ENCODE measurements at regions of chr10 and their contacts with region 1.

Region 1: DNA sequence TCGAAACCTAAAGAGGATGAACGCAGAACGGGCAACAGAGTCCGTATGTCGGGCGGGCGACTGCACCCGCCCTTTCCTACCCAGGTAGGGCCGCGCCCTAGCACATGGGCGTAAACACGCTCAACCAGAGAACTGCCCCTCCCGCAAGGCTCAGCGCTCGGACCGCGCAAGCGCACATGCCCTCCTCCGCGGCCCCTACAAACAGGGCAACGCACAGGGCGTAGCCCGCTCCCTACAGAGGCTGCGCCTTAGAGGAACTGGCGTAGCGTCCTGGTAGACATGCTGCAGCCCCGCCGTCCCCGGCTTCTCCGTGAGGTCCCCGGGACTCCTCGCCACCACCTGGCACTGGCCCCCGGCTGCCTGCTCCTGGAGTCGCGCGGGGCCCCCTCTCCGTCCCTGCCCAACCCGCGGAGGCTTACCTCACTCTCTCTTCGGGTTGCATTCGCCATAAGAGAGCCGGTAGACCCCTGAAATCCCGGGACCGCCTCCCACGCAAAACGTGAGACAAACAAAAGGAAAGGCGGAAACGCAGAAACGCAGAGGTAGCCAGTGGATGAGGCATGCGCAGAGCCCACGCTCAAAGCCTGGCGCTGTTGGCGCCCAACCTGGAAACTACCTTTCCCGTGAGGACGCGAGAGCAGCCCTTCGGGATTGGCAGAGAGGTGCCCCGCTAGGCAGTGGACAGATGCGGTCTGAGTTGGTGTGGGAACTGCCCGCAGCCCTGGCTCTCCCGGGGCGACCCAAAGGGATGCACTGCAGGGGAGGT is at the start of gene ZNF33B:
- DNase-seq: peak; percentile 96
- H3K4me3 Mint-ChIP-seq: peak within 1 kb of the TSS; percentile 83
- H3K27ac Mint-ChIP-seq: peak within 1 kb of the TSS; percentile 86
- H3K4me1 Mint-ChIP-seq: peaks cover 12% of the 10 kb centered on the region
- H3K27me3 Mint-ChIP-seq: no peaks in the 10 kb centered on the region
- CTCF ChIP-seq: no peak
- total RNA-seq, gene ZNF33B: 16.9 and 27.2 TPM in 2 replicates

Region 2: GRCh38 chr10:42552493-42553407 is 85.5 kb before region 1 on chr10:
- CTCF ChIA-PET with region 1: interaction called, 5 read pairs
- intact Hi-C with region 1: loop called (anchors 2 kb)
- DNase-seq: peak; percentile 91
- H3K4me3 Mint-ChIP-seq: peak overlapping the region; percentile 99
- H3K27ac Mint-ChIP-seq: peak overlapping the region; percentile 78
- H3K4me1 Mint-ChIP-seq: peaks cover 9% of the 10 kb centered on the region
- H3K27me3 Mint-ChIP-seq: no peaks in the 10 kb centered on the region
- CTCF ChIP-seq: no peak

Region 3: GRCh38 chr10:42623929-42624328 is 14.3 kb before region 1 on chr10:
- CTCF ChIA-PET with region 1: no interaction called
- intact Hi-C with region 1: no loop called
- DNase-seq: no peak
- H3K4me3 Mint-ChIP-seq: no peak overlapping the region
- H3K27ac Mint-ChIP-seq: no peak overlapping the region
- H3K4me1 Mint-ChIP-seq: no peaks in the 10 kb centered on the region
- H3K27me3 Mint-ChIP-seq: no peaks in the 10 kb centered on the region
- CTCF ChIP-seq: no peak

Region 4: GRCh38 chr10:42753126-42753506 is 114.9 kb after region 1 on chr10:
- CTCF ChIA-PET with region 1: interaction called, 8 read pairs
- intact Hi-C with region 1: loop called (anchors 5 kb)
- DNase-seq: peak; percentile 92
- H3K4me3 Mint-ChIP-seq: peak overlapping the region; percentile 82
- H3K27ac Mint-ChIP-seq: no peak overlapping the region
- H3K4me1 Mint-ChIP-seq: no peaks in the 10 kb centered on the region
- H3K27me3 Mint-ChIP-seq: peaks cover 33% of the 10 kb centered on the region
- CTCF ChIP-seq: peak; percentile 84

Region 5: GRCh38 chr10:42782446-42783180 is 144.4 kb after region 1 on chr10 and contains the start of gene BMS1:
- CTCF ChIA-PET with region 1: no interaction called
- intact Hi-C with region 1: loop called (anchors 2 kb)
- DNase-seq: peak; percentile 92
- H3K4me3 Mint-ChIP-seq: peak within 1 kb of the TSS; percentile 92
- H3K27ac Mint-ChIP-seq: peak within 1 kb of the TSS; percentile 85
- H3K4me1 Mint-ChIP-seq: no peaks in the 10 kb centered on the region
- H3K27me3 Mint-ChIP-seq: peaks cover 9% of the 10 kb centered on the region
- CTCF ChIP-seq: no peak
- total RNA-seq, gene BMS1: 25.9 and 26.2 TPM in 2 replicates

Region 6: DNA sequence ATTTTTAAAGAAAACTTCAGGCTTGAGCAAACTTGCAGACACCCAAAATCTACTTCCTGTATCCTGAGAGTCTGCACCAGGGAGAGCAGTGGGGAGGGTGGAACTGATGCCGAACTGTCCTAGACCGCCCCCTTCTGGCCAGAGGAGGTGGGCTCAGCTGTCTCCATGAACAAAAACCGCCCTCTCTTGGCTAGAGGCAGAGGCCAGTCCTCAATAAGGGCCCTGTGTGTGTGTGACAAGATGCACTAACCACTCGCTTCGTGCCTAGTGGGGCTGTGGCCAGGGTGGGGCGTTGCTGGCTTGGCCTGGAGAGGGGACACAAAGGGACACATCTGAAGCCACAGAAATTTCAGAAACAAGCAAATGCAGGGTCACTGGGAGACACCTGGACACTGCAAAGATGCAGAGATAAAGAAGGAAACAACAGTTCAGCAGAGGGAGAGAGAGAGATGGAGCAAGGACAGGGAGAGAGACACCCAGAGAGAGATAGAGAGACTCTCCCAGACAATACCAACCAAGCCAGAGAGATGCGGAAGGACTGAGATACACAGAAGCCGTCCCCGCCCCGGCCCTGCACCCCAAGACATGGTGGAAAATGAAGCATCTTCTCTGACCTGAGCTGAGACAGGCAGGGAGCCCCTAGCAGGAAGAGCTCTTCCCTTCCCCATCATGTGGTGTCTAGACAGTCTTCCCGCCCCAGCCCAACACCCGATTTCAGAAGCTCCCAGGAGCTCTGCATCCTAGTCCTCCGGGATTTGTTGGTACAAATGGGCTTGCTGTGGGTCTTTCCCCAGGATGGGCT is 710.5 kb after region 1 on chr10:
- CTCF ChIA-PET with region 1: no interaction called
- intact Hi-C with region 1: no loop called
- DNase-seq: peak; percentile 91
- H3K4me3 Mint-ChIP-seq: no peak overlapping the region
- H3K27ac Mint-ChIP-seq: no peak overlapping the region
- H3K4me1 Mint-ChIP-seq: peaks cover 55% of the 10 kb centered on the region
- H3K27me3 Mint-ChIP-seq: no peaks in the 10 kb centered on the region
- CTCF ChIP-seq: peak; percentile 81

Measured in Calu3 (cell line).